ENCODE measurements at regions of chr1 and their contacts with region 1.

Region 1: GRCh38 chr1:172745014-172745413 is 86.1 kb downstream of the FASLG start:
- DNase-seq: peak; percentile 99
- ATAC-seq: peak; percentile 27
- H3K4me3 ChIP-seq: no peak overlapping the region
- H3K27ac ChIP-seq: no peak overlapping the region
- H3K4me1 ChIP-seq: peaks cover 34% of the 10 kb centered on the region
- H3K27me3 ChIP-seq: no peaks in the 10 kb centered on the region
- CTCF ChIP-seq: peak; percentile 100

Region 2: GRCh38 chr1:172682812-172683211 is 62.2 kb before region 1 on chr1:
- CTCF ChIA-PET with region 1: no interaction called
- POLR2A ChIA-PET with region 1: no interaction called
- intact Hi-C with region 1: no loop called
- DNase-seq: no peak
- ATAC-seq: no peak
- H3K4me3 ChIP-seq: no peak overlapping the region
- H3K27ac ChIP-seq: no peak overlapping the region
- H3K4me1 ChIP-seq: peaks cover 10% of the 10 kb centered on the region
- H3K27me3 ChIP-seq: no peaks in the 10 kb centered on the region
- CTCF ChIP-seq: no peak

Region 3: DNA sequence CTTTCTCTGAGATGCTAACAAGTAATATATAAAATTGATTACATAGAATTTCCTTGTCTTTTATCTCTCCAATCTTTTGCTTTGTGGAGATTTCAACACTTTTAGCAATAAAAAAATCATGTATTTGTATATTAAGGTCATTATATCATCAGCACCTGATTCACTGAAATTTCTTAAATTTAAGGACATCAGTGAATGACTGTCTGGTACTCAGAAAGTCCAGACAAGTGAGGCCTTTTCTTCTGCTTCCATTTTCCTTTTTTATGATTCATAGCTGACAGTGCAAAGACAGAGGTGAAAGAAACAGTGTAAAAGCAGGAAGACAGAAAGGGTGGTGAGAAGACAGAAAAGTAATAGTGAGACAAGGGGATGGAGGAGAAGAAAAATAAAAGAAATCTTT is 31.5 kb before region 1 on chr1:
- CTCF ChIA-PET with region 1: no interaction called
- POLR2A ChIA-PET with region 1: no interaction called
- intact Hi-C with region 1: no loop called
- DNase-seq: no peak
- ATAC-seq: no peak
- H3K4me3 ChIP-seq: no peak overlapping the region
- H3K27ac ChIP-seq: no peak overlapping the region
- H3K4me1 ChIP-seq: peaks cover 7% of the 10 kb centered on the region
- H3K27me3 ChIP-seq: no peaks in the 10 kb centered on the region
- CTCF ChIP-seq: no peak

Region 4: GRCh38 chr1:172775616-172776015 is 30.6 kb after region 1 on chr1:
- CTCF ChIA-PET with region 1: interaction called, 4 read pairs
- POLR2A ChIA-PET with region 1: no interaction called
- intact Hi-C with region 1: loop called (anchors 1 kb)
- DNase-seq: no peak
- ATAC-seq: no peak
- H3K4me3 ChIP-seq: no peak overlapping the region
- H3K27ac ChIP-seq: no peak overlapping the region
- H3K4me1 ChIP-seq: no peaks in the 10 kb centered on the region
- H3K27me3 ChIP-seq: no peaks in the 10 kb centered on the region
- CTCF ChIP-seq: no peak

Region 5: GRCh38 chr1:172917972-172918371 is 173.0 kb after region 1 on chr1:
- CTCF ChIA-PET with region 1: interaction called, 3 read pairs
- POLR2A ChIA-PET with region 1: no interaction called
- intact Hi-C with region 1: loop called (anchors 1 kb)
- DNase-seq: peak; percentile 100
- ATAC-seq: peak; percentile 89
- H3K4me3 ChIP-seq: peak overlapping the region; percentile 4; the same call in 1 of the 2 replicates
- H3K27ac ChIP-seq: peak overlapping the region; percentile 72
- H3K4me1 ChIP-seq: peaks cover 63% of the 10 kb centered on the region
- H3K27me3 ChIP-seq: no peaks in the 10 kb centered on the region
- CTCF ChIP-seq: no peak

Region 6: GRCh38 chr1:173095632-173096031 is 350.6 kb after region 1 on chr1:
- CTCF ChIA-PET with region 1: no interaction called
- POLR2A ChIA-PET with region 1: no interaction called
- intact Hi-C with region 1: loop called (anchors 5 kb)
- DNase-seq: peak; percentile 98
- ATAC-seq: peak; percentile 97
- H3K4me3 ChIP-seq: no peak overlapping the region
- H3K27ac ChIP-seq: no peak overlapping the region
- H3K4me1 ChIP-seq: peaks cover 23% of the 10 kb centered on the region
- H3K27me3 ChIP-seq: no peaks in the 10 kb centered on the region
- CTCF ChIP-seq: no peak

Region 7: DNA sequence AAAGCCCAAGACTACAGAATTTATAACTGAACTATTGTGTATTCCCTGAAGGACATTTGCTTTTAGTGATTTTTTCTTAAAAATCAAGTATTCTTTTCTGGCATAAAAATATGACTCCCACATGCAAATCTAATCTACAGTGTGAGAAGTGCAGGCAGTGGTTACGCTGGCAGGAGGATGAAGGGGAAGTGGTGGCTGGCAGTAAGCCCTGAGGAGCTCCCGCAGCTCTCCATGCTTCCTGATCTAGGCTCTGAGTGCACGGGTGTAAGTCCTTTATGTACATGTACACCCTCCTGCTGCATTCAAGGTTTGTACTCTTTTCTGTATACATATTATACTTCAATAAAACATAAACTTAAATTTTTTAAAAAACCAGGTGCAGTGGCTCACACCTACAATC is 664.6 kb after region 1 on chr1:
- CTCF ChIA-PET with region 1: interaction called, 4 read pairs
- POLR2A ChIA-PET with region 1: no interaction called
- intact Hi-C with region 1: loop called (anchors 1 kb)
- DNase-seq: peak; percentile 94
- ATAC-seq: peak; percentile 72
- H3K4me3 ChIP-seq: no peak overlapping the region
- H3K27ac ChIP-seq: peak overlapping the region; percentile 9; the same call in 1 of the 2 replicates
- H3K4me1 ChIP-seq: peaks cover 49% of the 10 kb centered on the region
- H3K27me3 ChIP-seq: no peaks in the 10 kb centered on the region
- CTCF ChIP-seq: no peak

Region 8: GRCh38 chr1:173507205-173507846 is 762.3 kb after region 1 on chr1:
- CTCF ChIA-PET with region 1: interaction called, 5 read pairs
- POLR2A ChIA-PET with region 1: interaction called, 4 read pairs
- intact Hi-C with region 1: loop called (anchors 1 kb)
- DNase-seq: peak; percentile 100
- ATAC-seq: peak; percentile 87
- H3K4me3 ChIP-seq: peak overlapping the region; percentile 48
- H3K27ac ChIP-seq: peak overlapping the region; percentile 83
- H3K4me1 ChIP-seq: peaks cover 37% of the 10 kb centered on the region
- H3K27me3 ChIP-seq: no peaks in the 10 kb centered on the region
- CTCF ChIP-seq: no peak

Measured in PC-3 (cell line).